PC-9 (cell line): ENCODE measurements at regions of chrX and their contacts with region 1.

Region 1: DNA sequence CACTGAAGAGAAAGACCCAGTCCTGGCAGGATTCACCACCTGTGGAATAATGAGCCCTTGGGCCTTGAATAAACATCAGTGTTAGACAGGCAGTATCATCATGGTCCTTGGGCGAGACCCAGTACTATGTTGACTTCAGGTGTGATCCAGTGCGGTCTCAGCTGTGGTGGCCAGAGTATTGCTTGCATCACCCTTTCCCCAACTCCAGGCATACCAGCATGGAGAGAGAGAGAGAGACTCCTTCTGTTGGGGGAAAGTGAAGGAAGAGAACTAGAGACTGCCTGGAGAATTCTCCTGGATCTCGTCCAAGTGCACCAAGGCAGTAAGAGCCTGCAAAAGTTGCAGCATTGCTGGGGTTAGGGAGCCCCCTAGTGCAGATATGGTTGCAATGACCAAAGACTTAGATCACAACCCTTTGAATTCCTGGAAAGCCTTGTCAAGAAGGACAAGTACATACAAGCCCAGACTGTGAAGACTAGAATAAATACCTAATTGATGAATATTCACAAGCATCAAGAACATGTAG is 61.1 kb upstream of the VAMP7 start:
- DNase-seq: peak; percentile 57 to 71
- H3K4me3 ChIP-seq: no peak overlapping the region
- H3K27ac ChIP-seq: no peak overlapping the region
- H3K4me1 ChIP-seq: no peaks in the 10 kb centered on the region
- H3K27me3 ChIP-seq: no peaks in the 10 kb centered on the region
- CTCF ChIP-seq: peak; percentile 79

Region 2: DNA sequence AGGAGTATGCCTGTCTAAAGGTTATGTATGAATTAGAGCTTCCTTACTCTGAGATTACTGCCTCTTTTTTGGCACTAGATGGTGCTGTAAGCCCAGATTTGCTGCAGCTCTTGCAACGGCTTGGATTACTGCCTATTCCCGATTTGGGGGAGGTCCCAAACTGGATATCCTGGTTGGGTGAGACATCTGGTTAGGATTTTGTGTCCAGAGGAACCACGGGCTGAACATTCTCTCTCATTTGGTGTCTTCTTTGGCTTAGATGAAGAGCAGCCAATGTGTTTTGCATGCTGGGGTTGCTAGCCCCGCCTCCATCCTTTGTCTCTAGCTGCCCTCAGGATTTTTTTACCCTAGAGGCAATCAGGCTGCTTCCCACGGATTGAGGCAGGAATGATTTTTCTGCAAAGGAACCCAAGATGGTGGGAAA is 902.0 kb before region 1 on chrX:
- CTCF ChIA-PET with region 1: no interaction called
- POLR2A ChIA-PET with region 1: no interaction called
- intact Hi-C with region 1: loop called (anchors 2 kb)
- DNase-seq: peak; percentile 60 to 69
- H3K4me3 ChIP-seq: peak overlapping the region; percentile 35; the same call in 1 of the 2 replicates
- H3K27ac ChIP-seq: no peak overlapping the region
- H3K4me1 ChIP-seq: no peaks in the 10 kb centered on the region
- H3K27me3 ChIP-seq: no peaks in the 10 kb centered on the region
- CTCF ChIP-seq: peak; percentile 75

Region 3: DNA sequence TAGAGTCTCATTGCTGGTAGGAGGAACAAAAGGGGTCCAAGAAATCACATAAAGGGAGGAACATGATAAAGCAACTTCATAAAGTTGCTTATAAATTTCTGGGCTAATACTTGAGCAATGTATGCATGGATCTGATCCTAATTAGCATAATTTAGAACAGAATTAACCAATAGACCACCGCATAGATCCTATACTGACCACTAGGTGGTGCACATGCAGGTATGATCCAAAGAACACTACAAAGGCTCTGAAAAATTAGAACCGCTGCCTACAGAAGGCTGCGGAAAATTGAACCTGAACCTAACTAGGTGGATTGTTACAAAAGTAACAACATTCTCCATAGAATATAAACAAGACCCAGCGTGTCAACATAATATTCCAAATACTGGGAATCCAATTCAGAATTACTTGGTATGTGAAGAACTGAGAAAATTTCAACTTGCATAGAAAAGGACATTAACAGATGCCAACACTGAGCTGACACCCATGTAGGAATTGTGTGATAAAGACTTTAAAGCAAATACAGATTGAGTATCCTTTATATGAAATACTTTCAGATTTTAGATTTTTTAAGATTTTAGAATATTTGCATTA is 725.5 kb before region 1 on chrX:
- CTCF ChIA-PET with region 1: no interaction called
- POLR2A ChIA-PET with region 1: no interaction called
- intact Hi-C with region 1: loop called (anchors 1 kb)
- DNase-seq: peak in 1 of 2 experiments; percentile 7
- H3K4me3 ChIP-seq: no peak overlapping the region
- H3K27ac ChIP-seq: no peak overlapping the region
- H3K4me1 ChIP-seq: no peaks in the 10 kb centered on the region
- H3K27me3 ChIP-seq: no peaks in the 10 kb centered on the region
- CTCF ChIP-seq: peak; percentile 76

Region 4: GRCh38 chrX:155143959-155144548 is 676.0 kb before region 1 on chrX:
- CTCF ChIA-PET with region 1: no interaction called
- POLR2A ChIA-PET with region 1: no interaction called
- intact Hi-C with region 1: loop called (anchors 5 kb)
- DNase-seq: no peak
- H3K4me3 ChIP-seq: no peak overlapping the region
- H3K27ac ChIP-seq: no peak overlapping the region
- H3K4me1 ChIP-seq: no peaks in the 10 kb centered on the region
- H3K27me3 ChIP-seq: no peaks in the 10 kb centered on the region
- CTCF ChIP-seq: no peak

Region 5: GRCh38 chrX:155662282-155662681 is 157.7 kb before region 1 on chrX:
- CTCF ChIA-PET with region 1: no interaction called
- POLR2A ChIA-PET with region 1: no interaction called
- intact Hi-C with region 1: loop called (anchors 10 kb)
- DNase-seq: no peak
- H3K4me3 ChIP-seq: no peak overlapping the region
- H3K27ac ChIP-seq: no peak overlapping the region
- H3K4me1 ChIP-seq: no peaks in the 10 kb centered on the region
- H3K27me3 ChIP-seq: no peaks in the 10 kb centered on the region
- CTCF ChIP-seq: peak; percentile 52; the same call in 1 of the 2 replicates